ENCODE measurements at regions of chr3 and their contacts with region 1.

Region 1: DNA sequence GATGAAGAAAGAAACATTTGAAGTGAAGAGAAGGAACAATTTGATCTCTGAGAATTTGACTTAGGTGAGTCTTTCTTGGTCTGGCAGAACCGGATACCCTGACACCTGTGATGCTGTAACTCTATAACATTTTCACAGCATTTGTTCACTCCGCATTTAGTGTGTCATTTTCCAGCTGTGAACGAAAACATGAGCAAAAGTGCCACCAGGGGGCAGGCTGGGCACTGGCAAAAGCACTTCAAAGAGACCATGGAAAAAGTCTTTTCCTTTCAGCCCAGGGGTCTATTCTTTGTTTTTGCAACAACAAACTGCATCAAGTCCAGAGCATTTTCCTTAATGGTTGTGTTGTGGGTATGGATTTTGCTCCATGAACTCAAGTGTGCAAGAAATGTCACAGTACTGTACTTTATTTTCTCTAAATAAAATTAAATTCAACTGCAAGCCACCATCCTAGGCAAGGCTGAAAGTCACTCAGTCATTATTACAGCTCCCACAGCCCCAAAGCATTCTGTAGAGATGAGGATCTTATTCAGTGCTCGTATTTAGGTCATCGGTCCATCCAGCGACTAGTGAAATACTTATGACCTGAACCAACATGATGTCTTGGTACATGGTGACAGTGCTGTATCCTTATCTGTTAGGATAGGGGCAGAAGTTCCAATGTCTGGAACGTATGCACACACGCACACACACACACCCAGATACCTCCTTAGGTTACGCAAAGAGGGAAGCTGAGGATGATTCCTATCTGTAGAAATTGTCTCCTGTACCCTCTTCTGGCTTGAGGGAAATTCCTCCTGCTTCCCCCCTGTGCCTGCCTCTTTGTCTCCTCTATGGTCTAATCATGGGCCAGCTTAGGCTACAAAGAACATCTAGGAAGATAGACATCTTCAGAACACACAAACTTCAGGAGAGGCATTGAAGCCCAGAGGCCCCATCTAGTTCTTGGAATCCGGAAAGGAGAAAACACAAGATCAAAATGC is 125.5 kb downstream of the GADL1 start:
- DNase-seq: peak; percentile 78
- ATAC-seq: no peak
- H3K4me3 Mint-ChIP-seq: no peak overlapping the region
- H3K27ac Mint-ChIP-seq: no peak overlapping the region
- H3K4me1 Mint-ChIP-seq: peaks cover 2% of the 10 kb centered on the region
- H3K27me3 Mint-ChIP-seq: peaks cover 22% of the 10 kb centered on the region

Region 2: DNA sequence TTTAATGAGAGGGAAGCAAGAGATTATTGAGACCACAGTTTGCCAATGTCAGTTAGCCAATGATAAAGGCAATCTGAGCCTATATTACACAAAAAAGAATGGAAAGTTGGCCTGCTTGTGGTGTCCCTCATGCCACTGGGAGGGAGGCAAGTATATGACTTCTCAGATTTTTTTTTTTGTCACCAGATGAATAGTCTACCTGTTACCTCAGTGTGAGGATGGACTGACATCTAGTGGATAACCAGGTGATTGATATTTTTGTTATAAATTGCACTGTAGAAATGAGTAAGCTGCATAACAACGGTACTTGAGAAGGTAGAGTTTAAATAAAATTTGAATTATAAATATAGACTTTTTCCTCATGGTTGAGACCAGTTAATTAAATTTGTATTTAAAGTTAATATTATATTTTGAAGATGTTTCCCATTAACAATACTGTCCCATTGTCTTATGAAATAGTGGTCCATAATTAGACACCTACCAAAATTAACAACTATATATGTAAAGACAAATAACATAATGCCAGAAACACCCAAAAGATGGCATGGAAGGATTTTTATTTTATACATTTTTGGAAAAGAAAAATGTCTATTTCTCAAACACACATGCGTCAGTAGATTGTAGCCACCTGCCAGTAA is 363.3 kb after region 1 on chr3:
- CTCF ChIA-PET with region 1: interaction called, 16 read pairs
- POLR2A ChIA-PET with region 1: no interaction called
- DNase-seq: no peak
- ATAC-seq: no peak
- H3K4me3 Mint-ChIP-seq: no peak overlapping the region
- H3K27ac Mint-ChIP-seq: no peak overlapping the region
- H3K4me1 Mint-ChIP-seq: peaks cover 5% of the 10 kb centered on the region
- H3K27me3 Mint-ChIP-seq: no peaks in the 10 kb centered on the region